ENCODE measurements at regions of chr1 and their contacts with region 1.

Region 1: DNA sequence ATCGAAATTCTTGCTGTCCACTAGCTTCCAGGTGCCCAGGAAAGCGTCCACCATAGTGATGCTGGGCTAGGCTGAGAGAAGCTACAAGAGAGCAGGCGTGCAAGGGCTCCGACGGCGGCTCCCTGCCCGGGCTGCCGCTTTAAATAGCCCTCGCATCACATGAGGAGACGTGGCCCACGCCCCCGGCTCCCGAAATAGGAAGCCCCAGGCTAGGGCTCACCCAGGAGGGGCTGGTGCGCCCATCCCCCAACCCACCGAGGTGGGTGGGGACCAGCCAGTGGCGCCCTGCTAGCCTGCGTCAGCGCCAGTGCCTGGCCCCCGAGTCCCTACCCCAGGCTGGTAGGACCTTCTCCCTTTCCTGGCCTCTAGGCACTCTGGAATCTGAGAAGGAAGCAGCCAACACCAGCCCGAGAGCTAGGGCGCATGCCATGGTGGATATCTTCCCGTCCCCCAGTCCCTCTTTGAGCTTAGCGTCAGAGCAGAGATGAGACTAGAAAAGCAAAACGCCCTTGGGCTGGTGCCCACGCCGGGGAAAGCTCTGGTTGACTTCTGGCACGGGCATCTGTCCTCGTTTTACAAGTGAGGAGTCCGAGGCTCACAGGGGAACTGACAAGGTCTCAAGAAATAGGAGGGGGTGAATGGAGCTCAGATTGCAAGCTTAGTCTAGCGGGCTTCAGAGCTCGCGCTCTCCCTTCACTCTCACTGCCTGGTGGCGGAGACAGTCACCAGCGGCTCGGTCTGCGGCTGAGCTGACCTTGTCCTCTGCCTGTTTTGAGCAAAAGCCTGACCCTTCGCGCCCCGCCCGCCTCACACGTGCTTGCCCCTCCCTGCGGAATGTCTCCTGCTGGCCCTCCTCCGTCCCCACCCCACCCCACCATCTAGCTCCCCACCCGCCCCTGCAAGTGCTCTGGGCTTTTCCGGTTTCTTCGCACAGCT is at the start of gene FABP3:
- DNase-seq: peak; percentile 52
- H3K4me3 ChIP-seq: peak within 1 kb of the TSS; percentile 17 to 43 (median 35)
- H3K27ac ChIP-seq: no peak within 1 kb of the TSS
- H3K4me1 ChIP-seq: peaks cover 6% of the 10 kb centered on the region
- H3K27me3 ChIP-seq: no peaks in the 10 kb centered on the region
- CTCF ChIP-seq: no peak
- POLR2A ChIP-seq: no peak
- total RNA-seq, gene FABP3: 0.84 and 1.8 TPM in 2 replicates

Region 2: DNA sequence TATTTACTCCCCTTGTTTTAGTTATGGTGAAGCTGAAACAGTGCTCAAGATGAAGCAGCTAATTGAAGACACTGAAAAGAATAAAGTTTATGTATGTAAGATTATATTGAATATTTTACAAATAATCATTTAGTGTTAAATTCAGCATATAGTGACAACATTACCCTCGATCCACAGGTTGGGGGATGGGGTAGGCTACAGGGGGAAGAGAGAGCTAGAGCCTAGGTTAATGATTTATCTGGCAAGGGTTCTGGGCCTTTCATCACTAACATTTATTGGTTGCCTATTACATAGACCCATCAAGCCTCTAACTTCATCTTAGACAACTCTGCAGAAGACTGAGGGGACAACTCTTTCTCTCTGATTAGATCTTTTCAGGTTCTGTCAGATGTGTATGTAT is 55.1 kb before region 1 on chr1:
- CTCF ChIA-PET with region 1: no interaction called
- POLR2A ChIA-PET with region 1: no interaction called
- dilution Hi-C with region 1: no loop called
- intact Hi-C with region 1: no loop called
- DNase-seq: no peak
- H3K4me3 ChIP-seq: no peak overlapping the region
- H3K27ac ChIP-seq: no peak overlapping the region
- H3K4me1 ChIP-seq: no peaks in the 10 kb centered on the region
- H3K27me3 ChIP-seq: no peaks in the 10 kb centered on the region
- CTCF ChIP-seq: no peak
- POLR2A ChIP-seq: no peak

Region 3: DNA sequence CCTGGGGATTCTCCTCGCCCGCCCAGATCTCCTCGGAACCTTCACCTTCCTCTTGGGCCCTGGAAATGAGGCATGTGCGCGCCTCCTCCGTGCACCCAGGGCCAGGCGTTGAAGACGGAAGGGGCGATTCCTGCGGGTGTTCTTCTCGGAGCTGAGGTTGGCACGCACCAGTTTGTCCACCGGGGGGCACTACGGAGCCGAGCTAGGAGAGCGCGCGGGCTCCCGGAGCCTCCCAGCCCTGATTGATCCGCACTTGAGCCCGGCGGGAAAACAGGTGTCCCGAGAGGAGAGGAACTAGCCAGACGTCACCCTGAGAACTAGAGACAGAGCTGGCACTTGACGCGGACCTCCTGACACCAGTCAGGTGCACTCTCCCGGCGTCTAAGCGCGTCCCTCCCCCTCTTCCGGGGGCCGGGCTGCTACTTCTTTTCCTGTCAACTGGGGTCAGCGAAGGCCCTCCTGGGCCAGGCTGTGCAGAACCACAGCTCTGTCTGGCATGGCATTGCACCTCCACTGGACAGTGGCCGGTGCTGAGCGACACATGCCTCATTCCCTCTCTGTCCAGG is 21.5 kb after region 1 on chr1:
- CTCF ChIA-PET with region 1: interaction called, 26 read pairs
- POLR2A ChIA-PET with region 1: no interaction called
- dilution Hi-C with region 1: no loop called
- intact Hi-C with region 1: no loop called
- DNase-seq: peak; percentile 71
- H3K4me3 ChIP-seq: no peak overlapping the region
- H3K27ac ChIP-seq: no peak overlapping the region
- H3K4me1 ChIP-seq: peaks cover 5% of the 10 kb centered on the region
- H3K27me3 ChIP-seq: no peaks in the 10 kb centered on the region
- CTCF ChIP-seq: peak; percentile 90 to 96
- POLR2A ChIP-seq: no peak